ENCODE measurements at regions of chr7 and their contacts with region 1.

Region 1: GRCh38 chr7:66140924-66141323 is 26.3 kb downstream of the CRCP start:
- DNase-seq: peak; percentile 60 to 71
- ATAC-seq: peak; percentile 66 to 78 (median 72)
- H3K4me3 ChIP-seq: no peak overlapping the region
- H3K27ac ChIP-seq: peak overlapping the region in 3 of 10 donors; percentile 15 to 48 (median 18)
- H3K4me1 ChIP-seq: peaks cover 2 to 49% (median 34%) of the 10 kb centered on the region in 9 donors
- H3K27me3 ChIP-seq: no peaks in the 10 kb centered on the region
- CTCF ChIP-seq: peak; percentile 39 to 82 (median 64)

Region 2: DNA sequence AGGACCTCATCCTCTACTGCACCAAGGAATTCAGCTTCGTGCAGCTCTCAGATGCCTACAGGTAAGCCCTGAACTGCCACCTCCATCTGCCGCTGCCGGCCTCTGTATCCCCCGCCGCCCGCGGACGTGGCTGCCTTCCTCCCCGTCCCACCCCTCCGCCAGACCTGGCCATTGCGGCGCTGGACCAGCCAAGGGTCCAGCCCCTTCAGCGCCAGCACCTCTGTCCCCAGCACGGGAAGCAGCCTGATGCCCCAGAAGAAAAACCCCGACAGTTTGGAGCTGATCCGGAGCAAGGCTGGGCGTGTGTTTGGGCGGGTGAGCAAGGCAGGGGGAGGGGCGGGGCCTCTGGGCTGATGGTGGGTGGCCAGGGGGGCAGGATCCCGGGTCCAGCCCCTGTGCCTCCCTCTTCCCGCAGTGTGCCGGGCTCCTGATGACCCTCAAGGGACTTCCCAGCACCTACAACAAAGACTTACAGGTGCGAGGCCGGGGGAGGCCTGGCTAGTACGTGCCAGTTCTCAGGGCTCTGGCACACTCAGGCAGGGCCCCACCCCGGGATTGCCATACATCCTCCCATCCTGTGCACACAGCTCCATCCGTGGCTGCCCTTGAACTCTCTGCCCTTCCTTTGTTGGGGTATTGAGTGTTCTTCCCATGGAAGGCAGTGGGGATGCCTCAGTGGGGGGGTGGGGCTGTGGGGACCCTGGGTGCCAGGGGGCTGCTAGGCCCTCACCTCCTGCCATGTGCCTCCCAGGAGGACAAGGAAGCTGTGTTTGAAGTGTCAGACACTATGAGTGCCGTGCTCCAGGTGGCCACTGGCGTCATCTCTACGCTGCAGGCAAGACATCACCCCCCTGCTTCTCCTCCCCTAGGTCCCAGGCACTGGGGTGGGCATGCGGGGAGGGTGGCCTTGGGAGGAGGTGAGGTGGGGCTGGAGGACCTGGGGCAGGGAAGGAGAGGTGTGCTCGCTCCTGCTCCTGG is 51.8 kb before region 1 on chr7:
- intact Hi-C with region 1: no loop called
- DNase-seq: no peak
- ATAC-seq: no peak
- H3K4me3 ChIP-seq: no peak overlapping the region
- H3K27ac ChIP-seq: no peak overlapping the region
- H3K4me1 ChIP-seq: no peaks in the 10 kb centered on the region
- H3K27me3 ChIP-seq: no peaks in the 10 kb centered on the region
- CTCF ChIP-seq: no peak

Region 3: DNA sequence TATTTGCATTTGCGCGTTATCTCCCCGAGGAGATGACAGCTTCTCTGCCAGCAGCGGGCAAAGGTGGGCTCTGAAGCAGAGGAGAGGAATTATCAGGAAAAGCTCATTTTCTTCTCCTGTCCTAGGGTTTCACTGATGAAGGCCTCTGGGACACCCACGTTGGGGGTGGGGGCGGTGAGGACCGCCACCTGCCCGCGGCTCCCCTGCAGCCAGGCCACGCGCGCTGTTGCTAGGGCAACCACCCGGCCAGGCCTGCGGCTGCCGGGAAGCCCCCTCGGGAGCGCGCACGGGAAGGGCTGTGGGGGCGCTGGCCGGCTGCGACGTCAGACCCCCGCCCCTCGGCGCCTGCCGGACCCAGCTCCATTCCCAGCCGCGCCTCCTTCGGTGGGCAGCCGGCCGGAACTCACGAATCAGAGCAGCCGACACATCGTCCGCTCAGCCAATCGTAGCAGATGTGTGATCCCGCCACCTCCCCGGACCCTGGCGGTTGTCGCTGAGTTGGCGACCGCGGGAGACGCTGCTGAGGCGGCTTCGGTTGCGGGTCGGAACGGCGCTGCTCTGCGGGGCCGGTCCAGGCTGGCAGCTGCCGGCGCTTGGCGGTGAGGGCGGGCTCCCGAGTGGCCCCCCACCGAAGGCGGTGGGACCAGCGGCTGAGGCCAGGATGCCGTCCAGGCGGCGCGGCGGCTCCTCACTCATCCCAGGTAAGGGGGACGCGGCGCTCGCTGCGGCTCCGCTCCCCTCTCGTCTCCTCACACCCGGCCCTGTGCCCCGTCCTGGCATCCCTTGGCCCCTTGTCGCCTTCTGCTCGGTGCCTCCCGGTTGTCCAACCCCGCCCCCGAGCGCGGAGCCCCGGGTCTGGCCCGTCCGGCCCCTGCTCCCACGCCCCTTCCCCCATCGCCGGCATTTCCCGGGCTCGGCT is 64.2 kb after region 1 on chr7 and contains the start of gene TPST1:
- intact Hi-C with region 1: loop called in 3 of 10 experiments (anchors 2 to 10 kb)
- DNase-seq: peak; percentile 87 to 91
- ATAC-seq: peak; percentile 95 to 98 (median 97)
- H3K4me3 ChIP-seq: peak within 1 kb of the TSS; percentile 69 to 98 (median 92)
- H3K27ac ChIP-seq: peak within 1 kb of the TSS in 9 of 10 donors; percentile 60 to 90 (median 76)
- H3K4me1 ChIP-seq: peaks cover 0 to 28% (median 11%) of the 10 kb centered on the region in 9 donors
- H3K27me3 ChIP-seq: peaks cover 0 to 17% (median 0%) of the 10 kb centered on the region in 7 donors
- CTCF ChIP-seq: peak; percentile 39 to 78 (median 61)
- total RNA-seq, gene TPST1: 2.7 to 7.3 (median 4.7) TPM

Region 4: DNA sequence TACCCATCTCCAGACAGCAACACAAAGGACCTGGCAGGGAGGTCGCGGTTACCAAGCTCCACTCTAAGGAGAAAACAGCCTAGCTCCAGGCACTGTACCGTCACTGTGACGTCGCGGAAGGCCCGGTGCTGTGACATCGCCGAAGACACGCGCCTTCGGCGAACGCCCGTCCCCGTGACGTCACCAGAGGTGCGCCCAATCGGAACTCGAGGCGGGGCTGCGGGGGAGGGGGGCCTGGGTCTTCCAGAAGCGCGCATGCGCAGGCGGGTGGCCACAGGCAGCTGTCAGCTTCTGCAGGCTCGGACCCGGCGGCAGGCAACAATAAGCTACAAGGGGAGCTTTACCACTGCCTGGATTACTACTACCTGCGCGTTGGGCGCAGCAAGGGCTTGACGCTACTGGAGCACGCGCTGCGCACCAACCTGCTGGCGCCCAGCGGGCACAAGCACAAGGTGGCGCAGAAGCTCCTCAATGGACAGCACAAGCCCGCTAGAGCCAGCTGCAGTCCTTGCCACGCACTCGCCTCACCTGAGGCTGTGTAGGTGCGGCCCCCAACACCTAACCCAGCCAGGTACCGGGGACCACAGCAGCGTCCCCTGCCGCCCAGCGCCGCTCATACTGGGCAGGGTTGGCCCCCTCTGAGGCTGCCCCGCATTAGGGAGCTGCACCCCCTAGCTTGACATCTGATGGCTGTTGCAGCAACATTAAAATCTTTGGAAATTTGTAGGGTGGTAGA is 272.6 kb after region 1 on chr7:
- intact Hi-C with region 1: loop called in 2 of 10 experiments (anchors 10 kb)
- DNase-seq: peak; percentile 75 to 83
- ATAC-seq: peak; percentile 88 to 96 (median 92)
- H3K4me3 ChIP-seq: peak overlapping the region; percentile 18 to 64 (median 55)
- H3K27ac ChIP-seq: peak overlapping the region in 2 of 10 donors; percentile 26 to 31
- H3K4me1 ChIP-seq: peaks cover 0 to 16% (median 8%) of the 10 kb centered on the region in 9 donors
- H3K27me3 ChIP-seq: no peaks in the 10 kb centered on the region
- CTCF ChIP-seq: peak in 6 of 9 donors; percentile 23 to 59 (median 49)

Region 5: DNA sequence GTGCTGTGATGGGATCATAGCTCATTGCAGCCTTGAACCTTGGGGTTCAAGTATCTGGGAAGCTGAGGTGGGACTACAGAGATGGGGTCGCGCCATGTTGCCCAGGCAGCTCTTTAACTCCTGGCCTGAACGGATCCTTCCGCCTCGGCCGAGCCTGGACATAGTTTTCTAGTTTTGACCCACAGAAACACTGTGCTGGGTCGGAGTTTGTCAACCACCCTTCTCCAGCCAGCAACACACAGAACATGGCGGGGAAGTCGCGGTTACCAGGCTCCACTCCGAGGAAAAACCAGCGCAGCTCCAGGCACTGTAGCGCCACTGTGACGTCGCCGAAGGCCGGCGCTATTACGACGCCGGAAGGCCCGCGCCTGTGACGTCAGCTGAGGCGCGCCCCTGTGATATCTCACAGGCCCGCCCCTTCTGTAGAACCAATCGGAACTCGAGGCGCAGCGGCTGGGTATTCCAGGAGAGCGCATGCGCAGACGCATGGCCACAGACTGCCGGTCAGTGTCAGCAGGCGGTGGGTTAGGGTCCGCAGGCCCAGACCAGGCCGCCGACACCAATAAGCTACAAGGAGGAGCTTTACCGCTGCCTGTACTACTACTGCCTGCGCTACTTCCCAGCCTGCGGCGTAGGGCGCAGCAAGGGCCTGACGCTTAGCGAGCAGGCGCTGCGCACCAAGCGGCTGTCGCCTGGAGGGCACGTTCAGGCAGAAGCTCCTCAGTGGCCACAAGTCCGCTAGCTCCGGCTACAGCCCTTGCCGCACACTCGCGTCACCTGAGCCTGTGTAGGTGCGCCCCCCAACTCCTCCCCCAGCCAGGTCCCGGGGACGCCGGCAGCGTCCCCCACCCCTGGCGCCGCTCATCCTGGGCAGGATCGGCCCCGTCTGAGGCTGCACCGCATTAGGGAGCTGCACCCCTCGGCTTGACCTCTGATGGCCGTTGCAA is 352.6 kb after region 1 on chr7:
- intact Hi-C with region 1: loop called in 1 of 10 experiments (anchors 10 kb)
- DNase-seq: peak; percentile 97 to 98
- ATAC-seq: peak; percentile 98 to 99 (median 99)
- H3K4me3 ChIP-seq: peak overlapping the region; percentile 59 to 90 (median 70)
- H3K27ac ChIP-seq: peak overlapping the region; percentile 83 to 97 (median 94)
- H3K4me1 ChIP-seq: peaks cover 0 to 17% (median 15%) of the 10 kb centered on the region in 9 donors
- H3K27me3 ChIP-seq: no peaks in the 10 kb centered on the region
- CTCF ChIP-seq: peak in 6 of 9 donors; percentile 4 to 43 (median 26)

Region 6: GRCh38 chr7:66505531-66506451 is 364.9 kb after region 1 on chr7:
- intact Hi-C with region 1: loop called in 1 of 10 experiments (anchors 10 kb)
- DNase-seq: no peak
- ATAC-seq: peak in 6 of 8 donors; percentile 22 to 54 (median 36)
- H3K4me3 ChIP-seq: peak overlapping the region in 9 of 10 donors; percentile 22 to 49 (median 37)
- H3K27ac ChIP-seq: no peak overlapping the region
- H3K4me1 ChIP-seq: peaks cover 0 to 13% (median 5%) of the 10 kb centered on the region in 9 donors
- H3K27me3 ChIP-seq: peaks cover 3 to 47% (median 31%) of the 10 kb centered on the region in 7 donors
- CTCF ChIP-seq: no peak

Measured in heart right ventricle (tissue), 16 donors.